Heart left ventricle (tissue), 16 donors: ENCODE measurements at regions of chr7 and their contacts with region 1.

Region 1: DNA sequence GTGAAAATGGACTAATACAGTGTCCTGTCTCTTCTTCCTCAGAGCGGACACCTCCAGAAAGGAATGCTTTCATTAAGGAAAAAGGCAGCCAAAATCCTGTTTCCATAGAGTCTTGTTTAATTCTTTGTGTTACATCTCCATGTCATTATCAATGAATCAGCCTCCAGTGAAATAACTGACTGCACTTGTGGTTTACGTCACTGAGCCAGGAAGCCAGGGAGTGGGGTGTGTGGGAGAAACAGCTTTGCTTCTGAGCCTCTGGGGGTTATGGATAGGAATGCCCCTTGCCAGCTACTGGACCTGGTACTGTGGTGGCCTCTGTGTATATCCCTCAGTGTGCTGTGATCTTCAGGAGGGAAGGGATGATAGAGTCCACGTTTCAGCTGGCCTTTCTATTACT is 416.8 kb downstream of the GALNT17 start:
- DNase-seq: no peak
- ATAC-seq: no peak
- H3K4me3 ChIP-seq: no peak overlapping the region
- H3K27ac ChIP-seq: no peak overlapping the region
- H3K4me1 ChIP-seq: no peaks in the 10 kb centered on the region
- H3K27me3 ChIP-seq: no peaks in the 10 kb centered on the region
- CTCF ChIP-seq: no peak
- POLR2A ChIP-seq: no peak

Region 2: GRCh38 chr7:71507680-71508602 is 40.8 kb before region 1 on chr7:
- intact Hi-C with region 1: no loop called
- DNase-seq: no peak
- ATAC-seq: no peak
- H3K4me3 ChIP-seq: no peak overlapping the region
- H3K27ac ChIP-seq: no peak overlapping the region
- H3K4me1 ChIP-seq: no peaks in the 10 kb centered on the region
- H3K27me3 ChIP-seq: no peaks in the 10 kb centered on the region
- CTCF ChIP-seq: no peak
- POLR2A ChIP-seq: no peak

Region 3: GRCh38 chr7:71601851-71602250 is 53.1 kb after region 1 on chr7:
- intact Hi-C with region 1: loop called in 1 of 10 experiments (anchors 10 kb)
- DNase-seq: no peak
- ATAC-seq: no peak
- H3K4me3 ChIP-seq: no peak overlapping the region
- H3K27ac ChIP-seq: no peak overlapping the region
- H3K4me1 ChIP-seq: no peaks in the 10 kb centered on the region
- H3K27me3 ChIP-seq: no peaks in the 10 kb centered on the region
- CTCF ChIP-seq: no peak
- POLR2A ChIP-seq: no peak